Endothelial cell of umbilical vein (primary cell): ENCODE measurements at regions of chr1 and their contacts with region 1.

Region 1: GRCh38 chr1:15218287-15219279 is 28.4 kb upstream of the FHAD1 start:
- DNase-seq: peak; percentile 98
- H3K4me3 ChIP-seq: no peak overlapping the region
- H3K27ac ChIP-seq: peak overlapping the region; percentile 42
- H3K4me1 ChIP-seq: peaks cover 15% of the 10 kb centered on the region
- H3K27me3 ChIP-seq: no peaks in the 10 kb centered on the region
- CTCF ChIP-seq: no peak
- POLR2A ChIP-seq: peak; percentile 54

Region 2: DNA sequence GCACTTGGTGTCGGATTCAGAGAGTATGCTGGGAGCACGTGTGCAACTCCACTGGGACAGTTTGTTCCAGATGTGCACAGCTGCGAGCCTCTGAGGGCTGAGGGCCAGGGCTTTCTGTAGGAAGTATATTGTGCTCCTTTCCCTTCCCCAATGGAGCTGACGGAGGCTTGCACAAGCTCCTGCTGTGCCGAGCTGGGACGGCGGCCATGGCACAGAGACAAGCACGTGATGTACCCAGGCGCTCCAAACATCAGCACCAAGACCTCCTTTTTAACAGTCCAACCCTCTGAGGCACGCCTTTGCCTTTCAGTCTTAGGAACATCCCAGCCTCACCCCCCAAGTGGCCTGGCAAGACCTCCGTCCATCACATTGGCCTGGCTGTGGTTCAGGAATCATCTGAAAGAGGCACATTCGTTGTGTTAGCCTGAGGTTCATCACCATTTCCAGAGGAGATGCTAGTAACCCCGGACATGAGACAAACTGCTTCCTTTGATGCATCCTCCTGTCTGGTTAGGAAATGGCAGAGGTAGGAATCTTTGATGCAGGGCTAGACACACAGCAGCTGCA is 959.3 kb before region 1 on chr1:
- CTCF ChIA-PET with region 1: no interaction called
- POLR2A ChIA-PET with region 1: no interaction called
- dilution Hi-C with region 1: no loop called
- intact Hi-C with region 1: no loop called
- DNase-seq: no peak
- H3K4me3 ChIP-seq: no peak overlapping the region
- H3K27ac ChIP-seq: no peak overlapping the region
- H3K4me1 ChIP-seq: no peaks in the 10 kb centered on the region
- H3K27me3 ChIP-seq: no peaks in the 10 kb centered on the region
- CTCF ChIP-seq: no peak
- POLR2A ChIP-seq: no peak

Region 3: DNA sequence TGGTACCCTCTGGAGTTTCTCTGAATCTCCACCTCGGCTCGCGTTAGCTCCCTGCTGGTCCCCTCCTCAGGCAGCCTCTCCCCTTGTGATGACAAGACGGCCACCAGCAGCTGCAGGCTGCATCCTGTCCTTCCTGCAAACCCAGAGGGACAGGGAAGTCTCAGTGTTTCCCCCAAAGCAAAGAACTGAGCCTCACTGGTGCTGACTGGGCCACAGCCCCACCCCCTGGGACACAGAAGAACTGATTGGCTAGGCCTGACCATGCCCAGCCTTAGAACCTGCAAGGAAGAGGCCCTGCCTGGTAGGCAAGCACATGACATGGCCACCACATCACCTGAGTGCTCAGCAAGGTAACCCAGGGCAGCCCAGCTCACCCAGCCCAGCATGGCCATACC is 30.5 kb before region 1 on chr1:
- CTCF ChIA-PET with region 1: interaction called, 3 read pairs
- POLR2A ChIA-PET with region 1: no interaction called
- dilution Hi-C with region 1: no loop called
- intact Hi-C with region 1: loop called (anchors 1 kb)
- DNase-seq: no peak
- H3K4me3 ChIP-seq: no peak overlapping the region
- H3K27ac ChIP-seq: peak overlapping the region; percentile 68
- H3K4me1 ChIP-seq: peaks cover 17% of the 10 kb centered on the region
- H3K27me3 ChIP-seq: no peaks in the 10 kb centered on the region
- CTCF ChIP-seq: no peak
- POLR2A ChIP-seq: no peak

Region 4: GRCh38 chr1:15246960-15247614 is 28.5 kb after region 1 on chr1 and contains the start of gene FHAD1:
- CTCF ChIA-PET with region 1: interaction called, 3 read pairs
- POLR2A ChIA-PET with region 1: no interaction called
- dilution Hi-C with region 1: no loop called
- intact Hi-C with region 1: loop called (anchors 1 kb)
- DNase-seq: peak; percentile 64
- H3K4me3 ChIP-seq: peak within 1 kb of the TSS in 2 of 3 experiments; percentile 18 to 46
- H3K27ac ChIP-seq: no peak within 1 kb of the TSS
- H3K4me1 ChIP-seq: peaks cover 3% of the 10 kb centered on the region
- H3K27me3 ChIP-seq: peaks cover 23 to 24% of the 10 kb centered on the region in 2 experiments
- CTCF ChIP-seq: no peak
- POLR2A ChIP-seq: no peak
- total RNA-seq, gene FHAD1: 0.51 and 0.69 TPM in 2 replicates

Region 5: GRCh38 chr1:15272009-15272788 is 53.6 kb after region 1 on chr1:
- CTCF ChIA-PET with region 1: interaction called, 5 read pairs
- POLR2A ChIA-PET with region 1: no interaction called
- dilution Hi-C with region 1: no loop called
- intact Hi-C with region 1: loop called (anchors 1 kb)
- DNase-seq: peak; percentile 72
- H3K4me3 ChIP-seq: no peak overlapping the region
- H3K27ac ChIP-seq: no peak overlapping the region
- H3K4me1 ChIP-seq: no peaks in the 10 kb centered on the region
- H3K27me3 ChIP-seq: no peaks in the 10 kb centered on the region
- CTCF ChIP-seq: peak; percentile 76 to 79
- POLR2A ChIP-seq: no peak